GM10248 (cell line): ENCODE measurements at regions of chr17 and their contacts with region 1.

Region 1: DNA sequence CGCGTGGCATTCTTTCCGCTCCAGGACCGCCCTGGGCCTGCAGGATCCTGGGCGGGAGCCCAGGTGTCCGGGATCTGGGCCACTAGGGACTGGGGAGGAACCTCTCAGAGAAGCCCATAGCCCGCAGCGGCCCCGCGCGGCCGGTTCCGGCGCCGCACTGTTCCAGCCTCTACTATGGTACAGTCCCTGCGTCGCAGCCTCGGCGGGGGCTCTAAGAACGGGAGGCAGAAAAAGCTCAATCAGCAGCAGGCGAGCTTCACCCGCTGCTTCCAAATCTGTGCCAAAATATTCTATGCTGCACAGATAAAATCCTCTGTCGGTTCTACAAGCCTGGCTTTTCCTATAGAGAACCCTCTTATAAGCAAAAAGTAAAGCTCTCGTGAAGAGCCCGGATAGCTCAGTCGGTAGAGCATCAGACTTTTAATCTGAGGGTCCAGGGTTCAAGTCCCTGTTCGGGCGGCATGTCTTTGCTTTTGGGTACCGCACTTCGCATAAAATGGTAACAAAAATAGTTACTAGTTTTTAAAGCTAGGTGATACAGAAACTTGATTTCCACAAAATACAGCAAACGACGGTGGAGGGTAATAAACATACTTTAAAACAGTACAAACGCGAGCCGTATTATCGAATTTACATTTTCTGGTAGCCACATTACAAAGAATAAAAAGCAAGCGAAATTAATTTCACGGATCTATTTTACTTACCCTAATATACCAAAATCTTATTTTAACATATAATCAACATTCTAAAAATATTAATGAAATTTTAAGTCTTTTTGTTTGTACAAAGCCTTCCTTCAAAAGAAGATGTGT is 661 bp upstream of the ALOXE3 start:
- DNase-seq: peak; percentile 87
- CTCF ChIP-seq: peak; percentile 83

Region 2: GRCh38 chr17:8073627-8074484 is 45.1 kb before region 1 on chr17:
- CTCF ChIA-PET with region 1: interaction called, 76 read pairs
- POLR2A ChIA-PET with region 1: interaction called, 6 read pairs
- DNase-seq: peak; percentile 90
- CTCF ChIP-seq: peak; percentile 93

Region 3: DNA sequence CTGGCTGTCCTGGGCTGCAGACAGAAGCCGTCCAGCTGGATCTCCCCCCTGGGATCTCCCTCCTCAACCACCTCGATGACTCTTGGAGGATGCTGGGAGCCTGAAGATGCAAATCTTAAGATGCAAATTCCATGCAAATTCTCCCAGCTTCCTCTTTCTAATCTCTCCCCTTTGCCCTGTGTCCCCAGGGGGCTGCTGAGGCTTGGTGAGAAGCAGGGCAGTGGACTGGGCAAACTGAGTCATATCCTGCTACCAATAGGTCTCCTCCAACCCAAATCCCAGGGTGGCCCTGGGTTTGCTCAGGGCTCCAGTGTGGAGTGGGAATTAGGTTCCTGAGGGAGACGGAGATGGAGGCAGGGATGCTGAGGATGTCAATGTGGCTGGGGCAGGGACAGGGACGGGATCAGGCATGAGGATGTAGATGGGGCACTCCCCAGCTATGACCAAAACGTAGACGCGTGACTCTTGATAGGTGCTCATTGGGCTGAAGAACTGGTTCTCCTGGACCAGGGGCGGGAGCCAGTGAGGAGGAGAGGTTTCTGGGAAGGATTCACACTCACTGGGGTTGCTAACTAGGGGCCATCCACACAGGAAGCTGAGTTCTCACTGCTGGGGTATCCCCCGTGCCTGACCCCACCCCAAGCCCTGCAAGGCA is 27.8 kb before region 1 on chr17:
- CTCF ChIA-PET with region 1: interaction called, 103 read pairs
- POLR2A ChIA-PET with region 1: no interaction called
- DNase-seq: peak; percentile 70
- CTCF ChIP-seq: no peak

Region 4: GRCh38 chr17:8156246-8156992 is 37.4 kb after region 1 on chr17:
- CTCF ChIA-PET with region 1: interaction called, 20 read pairs
- POLR2A ChIA-PET with region 1: interaction called, 10 read pairs
- DNase-seq: peak; percentile 96
- CTCF ChIP-seq: no peak

Region 5: DNA sequence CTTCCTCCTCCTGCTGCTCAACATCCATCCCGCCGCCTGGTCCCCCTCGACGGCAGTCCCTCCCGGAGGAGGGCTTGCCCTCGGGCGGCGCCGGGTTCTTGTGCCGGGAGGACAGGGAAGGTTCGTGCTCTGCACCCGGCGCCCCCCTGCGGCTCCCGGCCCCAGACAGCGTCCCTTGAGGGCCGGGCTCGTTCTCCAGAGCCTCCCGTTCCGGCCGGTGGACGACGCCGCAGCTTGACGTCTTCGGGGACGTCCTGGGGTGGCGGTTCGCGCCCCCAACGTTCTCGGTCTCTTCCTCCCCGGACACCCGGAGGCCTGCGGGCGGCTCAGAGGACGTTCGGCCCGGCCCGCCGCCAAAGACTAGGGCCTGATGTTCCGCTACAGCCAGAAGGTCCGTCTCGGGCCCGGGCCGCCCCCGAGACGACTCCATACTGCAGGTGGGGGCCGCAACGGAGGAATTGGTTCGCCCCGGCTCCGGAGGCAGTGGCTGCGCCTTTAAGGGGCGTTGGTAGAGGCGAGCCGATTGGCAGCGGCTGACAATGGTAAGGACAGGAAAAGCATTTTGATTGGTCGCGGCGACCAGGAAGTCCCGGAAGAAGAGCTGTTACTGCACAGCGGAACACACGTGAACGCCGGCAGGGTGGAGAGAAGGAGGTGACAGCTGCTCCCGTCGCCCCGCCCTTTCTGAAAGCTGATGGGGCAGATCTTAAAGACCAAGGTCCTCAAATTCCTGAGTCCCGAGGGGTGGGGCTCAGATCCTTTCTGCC is 70.9 kb after region 1 on chr17 and contains the start of gene BORCS6:
- CTCF ChIA-PET with region 1: interaction called, 12 read pairs
- POLR2A ChIA-PET with region 1: no interaction called
- DNase-seq: peak; percentile 91
- CTCF ChIP-seq: peak; percentile 33

Region 6: GRCh38 chr17:8294814-8295316 is 175.9 kb after region 1 on chr17:
- CTCF ChIA-PET with region 1: interaction called, 12 read pairs
- POLR2A ChIA-PET with region 1: no interaction called
- DNase-seq: no peak
- CTCF ChIP-seq: no peak